Naive thymus-derived CD4-positive, alpha-beta T cell (primary cell): ENCODE measurements at regions of chr1 and their contacts with region 1.

Region 1: DNA sequence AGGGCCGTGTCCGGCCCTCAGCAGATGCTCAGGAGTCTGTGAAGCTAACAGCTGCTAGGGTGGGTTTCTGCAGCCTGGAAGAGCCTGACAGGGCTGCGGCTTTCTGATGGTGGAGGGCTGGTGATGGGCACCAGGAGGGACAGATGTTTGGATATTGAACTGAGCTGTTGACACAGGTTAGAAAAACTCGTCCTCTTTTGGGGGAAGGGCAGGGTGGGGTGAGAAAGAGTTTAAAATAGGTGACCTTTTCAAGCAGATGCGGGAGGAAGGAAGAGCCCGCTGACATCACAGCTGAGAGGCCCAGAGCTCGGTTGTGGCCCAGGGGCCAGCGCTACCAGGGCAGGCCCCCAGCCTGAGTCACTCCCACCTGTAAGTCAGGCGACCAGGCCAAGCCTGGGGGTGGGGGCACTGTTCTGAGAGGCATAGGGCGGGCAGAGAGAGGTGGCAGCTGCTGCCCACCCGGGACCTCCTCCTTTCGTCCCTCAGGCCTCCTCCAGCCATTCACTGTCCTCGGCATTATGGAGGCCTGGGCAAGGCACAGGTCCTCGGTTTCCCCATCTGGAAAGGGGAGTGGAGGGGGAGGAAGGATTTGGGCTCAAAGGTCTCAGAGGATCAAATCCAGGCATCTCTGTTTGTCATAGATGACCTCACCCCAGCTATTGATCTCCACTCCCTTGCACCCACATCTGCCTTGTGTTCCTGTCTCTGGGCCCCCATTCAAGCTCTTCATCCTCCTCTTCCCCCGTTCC is 32.3 kb upstream of the ID3 start:
- DNase-seq: peak in 1 of 9 donors; percentile 53
- ATAC-seq: peak; percentile 58
- H3K4me3 ChIP-seq: no peak overlapping the region
- H3K4me3 Mint-ChIP-seq: peak overlapping the region in 9 of 10 donors; percentile 9 to 75 (median 53)
- H3K27ac ChIP-seq: no peak overlapping the region
- H3K27ac Mint-ChIP-seq: peak overlapping the region; percentile 28 to 93 (median 77)
- H3K4me1 ChIP-seq: peaks cover 31 to 46% of the 10 kb centered on the region in 2 donors
- H3K4me1 Mint-ChIP-seq: peaks cover 42 to 83% (median 62%) of the 10 kb centered on the region in 7 donors
- H3K27me3 ChIP-seq: no peaks in the 10 kb centered on the region
- H3K27me3 Mint-ChIP-seq: no peaks in the 10 kb centered on the region

Region 2: GRCh38 chr1:23577056-23578004 is 14.3 kb before region 1 on chr1:
- CTCF ChIA-PET with region 1: interaction called, 4 read pairs
- POLR2A ChIA-PET with region 1: interaction called, 1,267 read pairs
- intact Hi-C with region 1: loop called in 1 of 2 experiments (anchors 2 kb)
- DNase-seq: peak in 1 of 9 donors; percentile 50
- ATAC-seq: peak; percentile 79
- H3K4me3 ChIP-seq: peak overlapping the region; percentile 25
- H3K4me3 Mint-ChIP-seq: peak overlapping the region; percentile 41 to 72 (median 62)
- H3K27ac ChIP-seq: peak overlapping the region; percentile 59
- H3K27ac Mint-ChIP-seq: peak overlapping the region; percentile 22 to 97 (median 84)
- H3K4me1 ChIP-seq: peaks cover 6 to 29% of the 10 kb centered on the region in 2 donors
- H3K4me1 Mint-ChIP-seq: peaks cover 12 to 67% (median 53%) of the 10 kb centered on the region in 7 donors
- H3K27me3 ChIP-seq: no peaks in the 10 kb centered on the region
- H3K27me3 Mint-ChIP-seq: no peaks in the 10 kb centered on the region